ENCODE measurements at regions of chr21 and their contacts with region 1.

Region 1: GRCh38 chr21:26842976-26843932 is 2.0 kb downstream of the ADAMTS1 start:
- DNase-seq: peak; percentile 95 to 97
- ATAC-seq: peak; percentile 75
- H3K4me3 ChIP-seq: peak overlapping the region; percentile 88 to 93
- H3K27ac ChIP-seq: peak overlapping the region in 1 of 2 donors; percentile 87
- H3K4me1 ChIP-seq: no peaks in the 10 kb centered on the region
- H3K27me3 ChIP-seq: no peaks in the 10 kb centered on the region

Region 2: DNA sequence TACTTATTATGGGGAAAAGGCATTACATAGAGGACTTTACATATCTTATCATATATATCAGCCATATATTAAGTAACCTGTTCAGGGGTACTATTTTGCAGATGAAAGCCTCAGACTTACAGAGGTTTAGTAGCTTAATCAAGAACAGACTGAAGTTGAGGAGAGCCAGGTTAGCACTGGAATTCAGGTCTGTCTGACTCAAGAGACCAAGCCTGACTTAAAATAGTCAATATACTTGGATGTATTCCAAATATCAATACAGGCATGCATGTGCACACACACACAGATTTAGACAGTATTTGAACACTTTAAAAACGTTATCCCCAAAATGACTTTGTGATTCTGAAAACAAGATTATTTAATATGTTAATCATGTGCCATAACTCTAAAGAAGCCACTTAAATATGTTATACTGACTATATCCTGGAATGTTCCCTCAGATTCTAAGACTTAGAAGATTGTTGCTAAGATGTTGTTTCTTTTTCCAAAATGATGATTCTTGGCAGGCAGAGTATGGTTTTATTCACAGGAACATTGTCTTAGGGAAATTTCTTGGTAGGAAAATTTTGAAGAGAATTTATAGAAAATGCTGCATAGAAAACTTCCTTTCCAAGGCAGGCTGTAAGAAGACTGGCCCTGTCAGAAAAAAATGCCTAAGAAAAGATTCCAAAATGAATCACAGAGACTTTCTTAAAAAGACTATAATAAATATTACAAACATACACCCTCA is 59.6 kb before region 1 on chr21:
- intact Hi-C with region 1: loop called (anchors 5 kb)
- DNase-seq: no peak
- ATAC-seq: no peak
- H3K4me3 ChIP-seq: no peak overlapping the region
- H3K27ac ChIP-seq: no peak overlapping the region
- H3K4me1 ChIP-seq: peaks cover 4 to 9% of the 10 kb centered on the region in 2 donors
- H3K27me3 ChIP-seq: no peaks in the 10 kb centered on the region

Region 3: GRCh38 chr21:28063241-28064216 is 1220.3 kb after region 1 on chr21:
- intact Hi-C with region 1: loop called in 1 of 2 experiments (anchors 10 kb)
- DNase-seq: no peak
- ATAC-seq: no peak
- H3K4me3 ChIP-seq: no peak overlapping the region
- H3K27ac ChIP-seq: no peak overlapping the region
- H3K4me1 ChIP-seq: no peaks in the 10 kb centered on the region
- H3K27me3 ChIP-seq: no peaks in the 10 kb centered on the region

Measured in aorta (tissue), 5 donors.